GM12878 (cell line): ENCODE measurements at regions of chr20 and their contacts with region 1.

Region 1: GRCh38 chr20:25499855-25500434 is 85.4 kb downstream of the NINL start:
- DNase-seq: no peak
- ATAC-seq: no peak
- H3K4me3 ChIP-seq: no peak overlapping the region
- H3K27ac ChIP-seq: no peak overlapping the region
- H3K4me1 ChIP-seq: no peaks in the 10 kb centered on the region
- H3K27me3 ChIP-seq: no peaks in the 10 kb centered on the region
- CTCF ChIP-seq: peak in 1 of 3 experiments; percentile 15; a peak in 1 of 6 replicates
- EP300 ChIP-seq: no peak
- POLR2A ChIP-seq: no peak
- RAD21 ChIP-seq: no peak; the same call in 1 of the 2 replicates

Region 2: GRCh38 chr20:25424536-25424935 is 75.4 kb before region 1 on chr20:
- CTCF ChIA-PET with region 1: no interaction called
- POLR2A ChIA-PET with region 1: no interaction called
- RAD21 ChIA-PET with region 1: no interaction called
- SMC1A ChIA-PET with region 1: no interaction called
- in situ Hi-C with region 1: no loop called
- intact Hi-C with region 1: no loop called
- DNase-seq: no peak
- ATAC-seq: no peak
- H3K4me3 ChIP-seq: no peak overlapping the region
- H3K27ac ChIP-seq: no peak overlapping the region
- H3K4me1 ChIP-seq: no peaks in the 10 kb centered on the region
- H3K27me3 ChIP-seq: no peaks in the 10 kb centered on the region
- CTCF ChIP-seq: no peak
- EP300 ChIP-seq: no peak
- POLR2A ChIP-seq: no peak
- RAD21 ChIP-seq: no peak

Region 3: DNA sequence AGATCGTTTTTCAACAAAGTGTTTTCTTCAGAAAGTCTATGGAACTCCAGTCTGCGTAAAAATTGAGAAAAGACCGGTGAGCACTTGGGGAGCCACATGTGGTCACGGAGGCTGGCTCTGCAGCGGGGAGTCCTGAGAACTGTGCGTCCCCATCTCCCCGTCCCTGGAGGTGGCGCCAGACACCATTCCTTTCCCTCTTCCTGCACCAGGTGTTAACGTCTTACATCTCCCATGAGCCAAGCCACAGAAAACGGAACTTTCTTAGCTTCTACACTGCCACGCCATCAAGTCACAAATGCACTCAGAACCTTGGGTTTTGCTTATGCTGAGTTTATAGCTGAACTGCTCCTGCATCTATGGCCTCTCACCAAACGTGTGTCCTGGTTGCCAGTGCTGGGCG is 29.9 kb before region 1 on chr20:
- CTCF ChIA-PET with region 1: no interaction called
- POLR2A ChIA-PET with region 1: no interaction called
- RAD21 ChIA-PET with region 1: no interaction called
- SMC1A ChIA-PET with region 1: no interaction called
- in situ Hi-C with region 1: no loop called
- intact Hi-C with region 1: no loop called
- DNase-seq: peak; percentile 13
- ATAC-seq: peak; percentile 83
- H3K4me3 ChIP-seq: no peak overlapping the region
- H3K27ac ChIP-seq: no peak overlapping the region
- H3K4me1 ChIP-seq: no peaks in the 10 kb centered on the region
- H3K27me3 ChIP-seq: no peaks in the 10 kb centered on the region; a peak in 1 of 4 replicates
- CTCF ChIP-seq: peak; percentile 49 to 62 (median 58)
- EP300 ChIP-seq: no peak
- POLR2A ChIP-seq: no peak
- RAD21 ChIP-seq: peak; percentile 70

Region 4: DNA sequence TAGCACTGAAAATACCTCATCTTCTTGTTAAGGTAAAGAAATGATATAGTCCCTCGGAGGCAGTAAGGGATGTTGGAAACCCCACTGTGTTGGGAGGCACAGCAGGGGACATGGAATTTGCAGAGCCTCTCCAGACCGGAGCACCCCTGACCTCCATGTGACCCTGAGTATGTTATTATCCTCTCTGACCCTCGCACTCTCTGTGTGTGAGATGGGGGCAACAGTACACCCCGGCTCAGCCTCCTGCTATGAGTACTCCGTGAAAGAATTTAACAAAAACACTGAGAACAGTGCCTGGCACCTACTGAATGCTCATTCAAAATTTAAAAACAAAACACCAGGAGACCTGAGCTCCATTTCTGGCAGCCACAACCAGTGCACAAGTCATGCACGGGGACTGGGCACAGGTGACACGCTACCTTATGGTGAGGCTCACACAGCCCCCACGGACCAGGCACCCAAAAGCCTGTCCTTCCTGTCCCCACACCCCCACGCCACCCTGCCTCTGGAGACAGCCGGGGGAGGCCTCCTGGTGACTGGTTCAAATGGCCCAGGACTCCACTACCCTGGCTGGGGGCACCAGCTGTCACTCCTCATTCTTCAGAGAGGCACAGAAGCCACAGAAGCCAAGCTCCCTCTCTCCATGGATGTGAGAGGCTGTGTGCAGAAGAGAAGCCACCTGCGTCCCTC is 79.3 kb after region 1 on chr20:
- CTCF ChIA-PET with region 1: no interaction called
- POLR2A ChIA-PET with region 1: no interaction called
- RAD21 ChIA-PET with region 1: no interaction called
- SMC1A ChIA-PET with region 1: no interaction called
- in situ Hi-C with region 1: loop called (anchors 5 kb)
- intact Hi-C with region 1: no loop called
- DNase-seq: no peak
- ATAC-seq: no peak
- H3K4me3 ChIP-seq: no peak overlapping the region
- H3K27ac ChIP-seq: no peak overlapping the region
- H3K4me1 ChIP-seq: no peaks in the 10 kb centered on the region
- H3K27me3 ChIP-seq: no peaks in the 10 kb centered on the region
- CTCF ChIP-seq: no peak
- EP300 ChIP-seq: no peak
- POLR2A ChIP-seq: no peak
- RAD21 ChIP-seq: no peak